ENCODE measurements at regions of chr1 and their contacts with region 1.

Region 1: GRCh38 chr1:115138968-115139367 is 49.7 kb upstream of the TSPAN2 start:
- DNase-seq: peak; percentile 42 to 57 (median 46)
- H3K4me3 ChIP-seq: no peak overlapping the region
- H3K4me3 Mint-ChIP-seq: peak overlapping the region; percentile 54 to 83 (median 62)
- H3K27ac ChIP-seq: no peak overlapping the region
- H3K27ac Mint-ChIP-seq: peak overlapping the region in 2 of 7 donors; percentile 24 to 70
- H3K4me1 ChIP-seq: peaks cover 7% of the 10 kb centered on the region
- H3K4me1 Mint-ChIP-seq: peaks cover 0 to 4% (median 1%) of the 10 kb centered on the region in 4 donors
- H3K27me3 ChIP-seq: no peaks in the 10 kb centered on the region
- H3K27me3 Mint-ChIP-seq: peaks cover 8 to 28% of the 10 kb centered on the region in 2 donors

Region 2: DNA sequence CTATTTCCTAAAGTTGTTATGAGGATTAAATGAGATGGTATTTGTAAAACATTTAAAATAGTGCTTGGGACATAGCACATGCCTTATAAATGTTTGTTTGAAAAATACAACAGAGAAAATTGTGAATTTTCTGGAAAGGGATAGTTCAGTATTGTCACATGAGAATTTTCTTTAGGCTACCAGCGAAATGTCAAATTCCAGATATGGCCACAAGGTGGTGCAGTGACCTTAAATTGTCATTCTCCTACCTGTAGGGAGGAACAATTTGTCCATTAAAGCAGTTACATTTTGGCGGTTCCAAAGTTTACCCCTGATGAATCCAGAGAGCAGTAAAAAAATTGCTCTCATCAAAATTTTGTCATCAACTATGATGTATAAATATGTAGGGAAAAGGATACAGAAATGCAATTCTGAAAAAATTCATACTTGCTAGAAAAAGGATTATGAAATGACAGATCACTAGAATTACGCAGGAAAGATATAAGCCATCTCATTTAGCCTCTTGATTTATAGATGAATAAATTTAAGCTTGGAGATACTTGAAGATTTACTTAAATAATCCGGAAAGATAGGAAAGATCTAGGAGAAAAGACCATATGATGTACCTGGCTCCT is 159.6 kb before region 1 on chr1:
- CTCF ChIA-PET with region 1: interaction called, 5 read pairs
- POLR2A ChIA-PET with region 1: no interaction called
- intact Hi-C with region 1: loop called (anchors 1 kb)
- DNase-seq: peak; percentile 57 to 67 (median 64)
- H3K4me3 ChIP-seq: no peak overlapping the region
- H3K4me3 Mint-ChIP-seq: no peak overlapping the region
- H3K27ac ChIP-seq: no peak overlapping the region
- H3K27ac Mint-ChIP-seq: no peak overlapping the region
- H3K4me1 ChIP-seq: no peaks in the 10 kb centered on the region
- H3K4me1 Mint-ChIP-seq: no peaks in the 10 kb centered on the region
- H3K27me3 ChIP-seq: no peaks in the 10 kb centered on the region
- H3K27me3 Mint-ChIP-seq: peaks cover 10 to 12% of the 10 kb centered on the region in 2 donors

Region 3: DNA sequence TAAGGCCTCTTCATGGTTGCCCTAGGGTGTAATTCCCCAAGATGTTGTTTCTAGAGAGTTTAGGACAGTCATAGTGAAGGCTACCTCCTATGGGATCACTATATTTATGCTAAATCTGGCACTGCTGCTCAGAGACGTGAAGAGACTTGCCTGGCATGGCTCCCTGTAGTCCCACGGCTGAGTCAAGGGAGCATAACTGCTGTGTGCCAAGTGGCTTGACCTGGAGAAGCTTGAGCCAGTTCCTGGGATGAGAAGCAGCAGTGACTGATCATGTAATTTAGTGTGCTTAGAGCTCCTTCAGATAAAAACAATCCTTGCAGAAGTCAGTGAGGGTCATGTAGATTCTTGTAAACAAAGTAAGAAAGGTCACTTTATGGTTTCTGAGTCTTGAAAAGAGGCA is 19.2 kb after region 1 on chr1:
- CTCF ChIA-PET with region 1: no interaction called
- POLR2A ChIA-PET with region 1: no interaction called
- intact Hi-C with region 1: no loop called
- DNase-seq: no peak
- H3K4me3 ChIP-seq: no peak overlapping the region
- H3K4me3 Mint-ChIP-seq: no peak overlapping the region
- H3K27ac ChIP-seq: no peak overlapping the region
- H3K27ac Mint-ChIP-seq: no peak overlapping the region
- H3K4me1 ChIP-seq: no peaks in the 10 kb centered on the region
- H3K4me1 Mint-ChIP-seq: no peaks in the 10 kb centered on the region
- H3K27me3 ChIP-seq: no peaks in the 10 kb centered on the region
- H3K27me3 Mint-ChIP-seq: peaks cover 1 to 5% of the 10 kb centered on the region in 2 donors

Region 4: GRCh38 chr1:115469703-115470476 is 330.9 kb after region 1 on chr1:
- CTCF ChIA-PET with region 1: interaction called, 16 read pairs
- POLR2A ChIA-PET with region 1: no interaction called
- intact Hi-C with region 1: no loop called
- DNase-seq: peak in 1 of 5 donors; percentile 2
- H3K4me3 ChIP-seq: no peak overlapping the region
- H3K4me3 Mint-ChIP-seq: peak overlapping the region in 1 of 8 donors; percentile 28
- H3K27ac ChIP-seq: no peak overlapping the region
- H3K27ac Mint-ChIP-seq: no peak overlapping the region
- H3K4me1 ChIP-seq: no peaks in the 10 kb centered on the region
- H3K4me1 Mint-ChIP-seq: peaks cover 0 to 8% (median 6%) of the 10 kb centered on the region in 4 donors
- H3K27me3 ChIP-seq: no peaks in the 10 kb centered on the region
- H3K27me3 Mint-ChIP-seq: peaks cover 6 to 9% of the 10 kb centered on the region in 2 donors

Region 5: DNA sequence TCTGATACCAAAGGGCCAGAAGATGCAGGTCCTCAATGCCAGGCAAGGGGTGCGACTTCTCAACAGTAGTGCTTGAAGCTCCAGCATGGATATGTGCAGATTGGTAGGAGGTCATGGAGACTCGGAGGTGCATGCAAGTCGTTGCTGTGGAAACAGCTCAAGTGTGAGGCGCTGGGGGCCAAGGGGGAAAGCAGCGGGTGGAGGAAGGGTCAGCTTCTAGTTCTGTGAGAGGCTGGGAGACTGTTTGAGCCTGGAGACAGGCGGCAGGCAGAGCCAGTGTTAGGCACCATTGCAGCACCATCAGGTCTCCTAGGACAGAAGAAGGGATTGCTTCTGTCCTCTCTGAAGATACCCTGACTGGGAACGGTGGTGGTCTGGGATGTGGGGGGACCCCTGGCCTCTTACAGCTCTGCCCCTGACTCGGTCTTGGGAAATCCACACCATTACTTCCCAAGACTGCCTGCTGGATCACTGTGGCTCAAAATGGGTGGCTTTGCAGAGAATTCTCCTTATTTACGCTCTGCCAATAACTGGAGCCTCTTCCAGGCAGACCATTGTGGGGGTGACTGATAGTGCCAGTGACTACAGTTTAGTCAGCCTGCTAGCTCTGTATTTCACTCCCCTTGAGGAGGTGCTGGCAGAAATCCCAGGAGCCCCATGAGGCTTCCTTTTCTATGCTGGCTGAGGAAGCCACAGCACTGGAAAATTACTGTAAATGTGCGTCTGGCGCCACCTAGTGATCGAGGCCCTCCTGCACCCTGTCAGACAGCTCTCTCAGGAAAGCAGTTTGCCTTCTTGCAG is 456.5 kb after region 1 on chr1:
- CTCF ChIA-PET with region 1: interaction called, 34 read pairs
- POLR2A ChIA-PET with region 1: no interaction called
- intact Hi-C with region 1: no loop called
- DNase-seq: peak in 4 of 5 donors; percentile 14 to 46 (median 24)
- H3K4me3 ChIP-seq: no peak overlapping the region
- H3K4me3 Mint-ChIP-seq: no peak overlapping the region
- H3K27ac ChIP-seq: no peak overlapping the region
- H3K27ac Mint-ChIP-seq: no peak overlapping the region
- H3K4me1 ChIP-seq: no peaks in the 10 kb centered on the region
- H3K4me1 Mint-ChIP-seq: no peaks in the 10 kb centered on the region
- H3K27me3 ChIP-seq: no peaks in the 10 kb centered on the region
- H3K27me3 Mint-ChIP-seq: peaks cover 1 to 4% of the 10 kb centered on the region in 2 donors